ENCODE measurements at regions of chr15 and their contacts with region 1.

Region 1: DNA sequence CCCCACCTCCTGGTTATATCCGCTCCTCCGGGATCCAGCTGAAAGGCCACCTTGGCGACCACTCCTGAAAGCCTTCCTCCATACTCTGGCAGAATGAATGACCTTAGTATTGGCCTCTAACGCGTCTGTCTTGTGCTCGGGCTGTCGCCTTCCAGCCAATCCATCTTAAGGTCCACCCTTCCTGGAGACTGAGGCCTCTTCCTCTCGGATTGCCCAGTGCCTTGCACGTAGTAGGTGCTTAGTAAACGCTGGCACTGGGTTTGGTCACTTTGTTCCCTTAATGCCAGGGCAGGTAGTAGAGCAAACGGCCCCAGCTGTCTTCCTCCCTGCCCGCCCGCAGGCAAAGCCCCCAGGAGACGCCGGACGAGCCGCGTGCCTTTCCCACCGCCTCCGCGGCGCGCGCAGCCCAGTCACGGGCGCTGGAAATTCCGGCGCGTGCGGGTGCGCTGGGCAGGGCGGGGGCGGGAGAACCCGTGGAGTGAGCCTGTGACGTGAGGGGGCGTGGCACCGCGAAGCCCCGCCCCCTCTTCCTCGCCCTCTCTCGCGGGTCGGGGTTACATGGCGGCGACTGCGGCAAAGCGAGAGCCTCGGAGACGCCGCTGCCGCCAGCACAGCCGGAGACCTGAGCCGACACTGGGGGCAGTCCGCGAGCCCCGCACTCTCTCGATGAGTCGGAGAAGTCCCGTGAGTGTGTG is at the start of gene MAPK6:
- DNase-seq: peak; percentile 94 to 96
- ATAC-seq: peak; percentile 92 to 98 (median 95)
- H3K4me3 ChIP-seq: peak within 1 kb of the TSS; percentile 56 to 83 (median 76)
- H3K27ac ChIP-seq: peak within 1 kb of the TSS; percentile 91 to 97 (median 94)
- H3K4me1 ChIP-seq: peaks cover 0 to 54% (median 42%) of the 10 kb centered on the region in 9 donors
- H3K27me3 ChIP-seq: no peaks in the 10 kb centered on the region
- CTCF ChIP-seq: no peak
- total RNA-seq, gene MAPK6: 13.5 to 21.8 (median 18.1) TPM

Region 2: GRCh38 chr15:51982013-51982769 is 36.6 kb before region 1 on chr15:
- intact Hi-C with region 1: loop called in 5 of 10 experiments (anchors 5 kb)
- DNase-seq: peak; percentile 23 to 24
- ATAC-seq: peak; percentile 71 to 87 (median 74)
- H3K4me3 ChIP-seq: peak overlapping the region in 7 of 10 donors; percentile 18 to 39 (median 32)
- H3K27ac ChIP-seq: peak overlapping the region; percentile 20 to 84 (median 72)
- H3K4me1 ChIP-seq: peaks cover 0 to 24% (median 22%) of the 10 kb centered on the region in 9 donors
- H3K27me3 ChIP-seq: no peaks in the 10 kb centered on the region
- CTCF ChIP-seq: peak; percentile 10 to 68 (median 56)

Region 3: GRCh38 chr15:51992976-51993375 is 25.9 kb before region 1 on chr15:
- intact Hi-C with region 1: loop called in 1 of 10 experiments (anchors 1 kb)
- DNase-seq: no peak
- ATAC-seq: no peak
- H3K4me3 ChIP-seq: no peak overlapping the region
- H3K27ac ChIP-seq: no peak overlapping the region
- H3K4me1 ChIP-seq: peaks cover 0 to 7% (median 0%) of the 10 kb centered on the region in 9 donors
- H3K27me3 ChIP-seq: no peaks in the 10 kb centered on the region
- CTCF ChIP-seq: no peak

Region 4: GRCh38 chr15:52679232-52680040 is 660.6 kb after region 1 on chr15 and contains the start of gene ATOSA:
- intact Hi-C with region 1: loop called in 1 of 10 experiments (anchors 10 kb)
- DNase-seq: peak; percentile 90 to 94
- ATAC-seq: peak; percentile 93 to 97 (median 95)
- H3K4me3 ChIP-seq: peak within 1 kb of the TSS; percentile 74 to 95 (median 89)
- H3K27ac ChIP-seq: peak within 1 kb of the TSS; percentile 95 to 99 (median 97)
- H3K4me1 ChIP-seq: peaks cover 0 to 50% (median 44%) of the 10 kb centered on the region in 9 donors
- H3K27me3 ChIP-seq: no peaks in the 10 kb centered on the region
- CTCF ChIP-seq: peak in 4 of 9 donors; percentile 4 to 21 (median 12)
- total RNA-seq, gene ATOSA: 18.9 to 36.4 (median 30.3) TPM